Mucosa of descending colon (tissue), 3 donors: ENCODE measurements at regions of chr2 and their contacts with region 1.

Region 1: GRCh38 chr2:48529676-48530032 is 300 bp upstream of the STON1 start:
- DNase-seq: peak in 1 of 3 donors; percentile 31
- ATAC-seq: peak; percentile 5
- H3K4me3 ChIP-seq: no peak overlapping the region
- H3K4me1 ChIP-seq: peaks cover 7% of the 10 kb centered on the region
- CTCF ChIP-seq: no peak

Region 2: GRCh38 chr2:48448274-48449061 is 81.2 kb before region 1 on chr2:
- intact Hi-C with region 1: no loop called
- DNase-seq: no peak
- ATAC-seq: peak; percentile 57
- H3K4me3 ChIP-seq: no peak overlapping the region
- H3K4me1 ChIP-seq: peaks cover 4% of the 10 kb centered on the region
- CTCF ChIP-seq: no peak

Region 3: GRCh38 chr2:48482313-48482712 is 47.3 kb before region 1 on chr2:
- intact Hi-C with region 1: loop called in 1 of 2 experiments (anchors 5 kb)
- DNase-seq: no peak
- ATAC-seq: no peak
- H3K4me3 ChIP-seq: no peak overlapping the region
- H3K4me1 ChIP-seq: peaks cover 5% of the 10 kb centered on the region
- CTCF ChIP-seq: no peak